Heart left ventricle (tissue), 16 donors: ENCODE measurements at regions of chr2 and their contacts with region 1.

Region 1: GRCh38 chr2:64644177-64645004 is 9.3 kb downstream of the SERTAD2 start:
- DNase-seq: peak; percentile 83 to 89 (median 86)
- ATAC-seq: peak; percentile 91 to 94 (median 92)
- H3K4me3 ChIP-seq: peak overlapping the region; percentile 11 to 62 (median 55)
- H3K27ac ChIP-seq: peak overlapping the region; percentile 63 to 96 (median 92)
- H3K4me1 ChIP-seq: peaks cover 10 to 82% (median 60%) of the 10 kb centered on the region in 12 donors
- H3K27me3 ChIP-seq: no peaks in the 10 kb centered on the region
- CTCF ChIP-seq: no peak
- POLR2A ChIP-seq: peak; percentile 6 to 90

Region 2: GRCh38 chr2:64092502-64092901 is 551.9 kb before region 1 on chr2:
- intact Hi-C with region 1: no loop called
- DNase-seq: no peak
- ATAC-seq: no peak
- H3K4me3 ChIP-seq: no peak overlapping the region
- H3K27ac ChIP-seq: no peak overlapping the region
- H3K4me1 ChIP-seq: no peaks in the 10 kb centered on the region
- H3K27me3 ChIP-seq: no peaks in the 10 kb centered on the region
- CTCF ChIP-seq: no peak
- POLR2A ChIP-seq: no peak

Region 3: GRCh38 chr2:64548761-64549160 is 95.6 kb before region 1 on chr2:
- intact Hi-C with region 1: no loop called
- DNase-seq: no peak
- ATAC-seq: no peak
- H3K4me3 ChIP-seq: no peak overlapping the region
- H3K27ac ChIP-seq: no peak overlapping the region
- H3K4me1 ChIP-seq: peaks cover 0 to 20% (median 5%) of the 10 kb centered on the region in 12 donors
- H3K27me3 ChIP-seq: no peaks in the 10 kb centered on the region
- CTCF ChIP-seq: no peak
- POLR2A ChIP-seq: no peak

Region 4: DNA sequence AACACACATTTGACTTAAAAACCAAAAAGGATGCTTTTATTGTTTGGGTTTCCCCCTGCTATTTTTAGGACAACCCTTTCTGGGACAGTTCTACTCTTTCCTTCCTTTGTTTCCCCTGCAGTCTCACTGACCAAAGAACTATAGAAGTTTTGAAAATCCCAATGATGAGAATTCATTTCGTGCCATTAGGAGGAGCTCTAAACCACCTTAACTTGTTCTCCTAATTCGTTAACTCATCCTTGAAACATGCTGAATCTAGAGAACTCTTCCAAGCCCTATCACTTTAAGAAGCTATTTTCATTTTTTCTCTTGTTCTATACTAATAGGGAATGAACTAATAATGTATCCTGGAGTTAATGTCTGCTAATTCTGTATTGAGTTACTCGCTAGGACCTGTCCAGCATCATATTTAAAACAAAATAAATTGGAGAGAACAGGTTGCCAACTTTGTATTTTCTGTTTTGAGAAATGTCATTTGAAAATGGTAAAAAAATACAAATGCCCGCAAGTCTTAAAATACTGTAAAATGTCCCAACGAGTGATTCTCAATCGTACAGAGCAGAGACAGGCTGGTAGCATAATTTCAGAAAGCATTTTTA is 57.4 kb before region 1 on chr2:
- intact Hi-C with region 1: loop called in 4 of 10 experiments (anchors 5 to 10 kb)
- DNase-seq: no peak
- ATAC-seq: peak in 3 of 4 donors; percentile 64 to 70 (median 66)
- H3K4me3 ChIP-seq: no peak overlapping the region
- H3K27ac ChIP-seq: peak overlapping the region in 1 of 12 donors; percentile 17
- H3K4me1 ChIP-seq: peaks cover 0 to 11% (median 0%) of the 10 kb centered on the region in 12 donors
- H3K27me3 ChIP-seq: no peaks in the 10 kb centered on the region
- CTCF ChIP-seq: peak; percentile 40 to 78 (median 69)
- POLR2A ChIP-seq: no peak

Region 5: DNA sequence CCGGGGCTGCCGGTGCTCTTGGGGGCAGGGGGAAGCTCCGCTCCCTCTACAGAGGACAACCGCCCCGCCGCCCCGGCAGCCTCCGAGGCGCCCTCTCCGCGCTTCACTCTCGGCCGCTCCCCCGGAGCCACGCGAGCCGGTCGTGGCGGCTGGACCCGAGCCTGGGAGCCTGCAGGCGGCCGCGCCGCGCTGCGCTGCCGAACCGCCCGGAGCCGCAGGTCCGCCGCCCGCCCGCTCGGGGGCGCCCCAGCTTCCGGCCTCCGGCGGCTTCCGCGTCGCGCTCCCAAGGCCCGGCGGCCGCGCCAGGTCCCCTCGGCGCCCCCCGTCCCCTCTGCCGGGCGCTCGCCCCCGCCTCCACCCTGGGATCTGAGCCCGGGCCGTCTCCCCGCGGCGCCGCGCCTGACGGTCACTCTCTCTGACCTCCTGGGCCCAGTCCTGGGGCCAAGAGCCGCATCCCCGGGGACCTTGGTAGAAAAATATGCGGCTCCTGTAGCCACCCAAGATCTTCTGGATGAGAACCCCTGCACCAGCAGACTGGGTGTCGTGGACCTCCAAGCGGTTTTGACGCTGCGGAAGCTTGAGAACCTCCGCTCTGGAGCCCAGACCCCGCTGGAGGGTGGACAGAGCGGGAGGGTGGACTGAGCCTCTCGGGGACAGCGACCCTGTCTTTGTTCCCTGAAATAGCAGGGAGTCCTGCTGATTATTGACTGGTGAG is 35.0 kb before region 1 on chr2:
- intact Hi-C with region 1: loop called in 4 of 10 experiments (anchors 5 kb)
- DNase-seq: peak; percentile 59 to 86 (median 68)
- ATAC-seq: peak; percentile 36 to 86 (median 65)
- H3K4me3 ChIP-seq: peak overlapping the region; percentile 20 to 88 (median 68)
- H3K27ac ChIP-seq: peak overlapping the region; percentile 39 to 86 (median 72)
- H3K4me1 ChIP-seq: peaks cover 0 to 30% (median 8%) of the 10 kb centered on the region in 12 donors
- H3K27me3 ChIP-seq: no peaks in the 10 kb centered on the region
- CTCF ChIP-seq: peak in 10 of 12 donors; percentile 13 to 71 (median 32)
- POLR2A ChIP-seq: peak in 1 of 2 donors; percentile 15

Region 6: DNA sequence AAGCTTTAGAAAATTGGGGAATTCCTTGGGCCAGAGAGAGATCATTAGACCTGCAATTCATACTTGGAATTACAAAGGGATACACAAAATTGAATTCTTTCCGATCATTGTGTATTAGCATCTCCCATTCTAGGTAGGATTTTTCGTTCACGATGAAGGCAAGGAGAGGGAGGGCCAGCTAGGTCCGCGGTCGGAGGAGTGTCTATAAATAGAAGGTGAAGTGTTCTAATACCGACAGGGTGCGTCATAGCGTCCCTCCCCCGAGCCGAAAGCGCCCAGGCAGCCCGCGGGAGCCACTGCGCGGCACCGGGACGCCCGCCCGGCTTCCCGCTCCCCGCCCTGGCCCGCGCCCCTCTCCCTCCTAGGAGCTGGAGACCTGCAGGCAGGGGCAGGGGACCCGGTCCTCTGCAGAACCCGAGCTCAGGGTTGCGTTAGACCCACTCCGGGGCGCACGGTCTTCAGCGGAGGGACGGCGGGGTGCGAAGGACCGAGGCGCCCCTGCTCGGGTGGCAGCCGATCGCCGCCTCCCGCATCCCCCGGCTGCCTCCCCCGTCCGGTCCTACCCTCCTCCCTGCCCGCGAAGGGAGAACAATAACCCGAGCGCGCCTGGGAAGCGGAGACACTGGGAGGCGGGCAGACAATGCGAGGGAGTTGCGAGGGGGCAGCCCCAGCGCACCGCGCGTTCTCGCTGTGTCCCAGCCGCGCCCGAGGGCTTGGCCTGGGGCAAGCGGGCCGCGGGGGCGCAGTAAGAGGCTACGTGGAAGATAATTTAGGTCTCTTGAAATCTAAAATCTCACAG is 123.5 kb after region 1 on chr2:
- intact Hi-C with region 1: loop called in 4 of 10 experiments (anchors 2 to 5 kb)
- DNase-seq: peak; percentile 93 to 95 (median 93)
- ATAC-seq: peak; percentile 94 to 97 (median 96)
- H3K4me3 ChIP-seq: peak overlapping the region; percentile 34 to 94 (median 77)
- H3K27ac ChIP-seq: peak overlapping the region; percentile 91 to 100 (median 98)
- H3K4me1 ChIP-seq: peaks cover 0 to 39% (median 21%) of the 10 kb centered on the region in 12 donors
- H3K27me3 ChIP-seq: no peaks in the 10 kb centered on the region
- CTCF ChIP-seq: peak in 6 of 12 donors; percentile 6 to 38 (median 16)
- POLR2A ChIP-seq: peak; percentile 38 to 93

Region 7: GRCh38 chr2:64865073-64865830 is 220.9 kb after region 1 on chr2:
- intact Hi-C with region 1: loop called in 8 of 10 experiments (anchors 1 to 5 kb)
- DNase-seq: peak; percentile 68 to 82 (median 71)
- ATAC-seq: peak; percentile 62 to 90 (median 80)
- H3K4me3 ChIP-seq: peak overlapping the region; percentile 47 to 88 (median 82)
- H3K27ac ChIP-seq: peak overlapping the region; percentile 77 to 94 (median 90)
- H3K4me1 ChIP-seq: peaks cover 0 to 58% (median 6%) of the 10 kb centered on the region in 12 donors
- H3K27me3 ChIP-seq: no peaks in the 10 kb centered on the region
- CTCF ChIP-seq: peak; percentile 28 to 100 (median 81)
- POLR2A ChIP-seq: no peak

Region 8: DNA sequence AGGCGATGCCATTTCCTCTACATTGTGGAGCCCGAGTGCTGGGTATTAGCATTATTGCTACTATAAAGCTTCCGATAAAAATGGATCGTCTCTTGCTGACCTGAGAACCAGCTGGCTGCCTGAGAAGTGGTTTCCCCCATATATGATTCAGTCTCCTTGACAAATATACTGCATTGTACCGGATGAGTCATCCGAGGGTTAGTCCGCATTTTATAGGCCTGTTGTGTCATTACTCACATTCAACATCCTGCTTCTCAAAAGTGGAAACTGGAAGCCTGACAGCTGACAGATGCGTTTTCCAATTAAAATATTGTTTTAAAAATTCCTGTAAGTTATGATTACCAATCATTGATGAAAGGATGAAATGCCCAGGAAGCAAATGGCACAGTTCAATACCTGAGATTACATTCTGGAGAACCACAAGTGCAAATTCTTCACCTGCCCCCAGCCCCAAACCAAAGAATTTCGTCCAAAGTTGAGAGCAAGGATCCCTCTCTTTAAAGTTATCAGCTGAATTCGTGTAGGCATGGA is 722.3 kb after region 1 on chr2:
- intact Hi-C with region 1: no loop called
- DNase-seq: peak in 1 of 5 donors; percentile 25
- ATAC-seq: peak in 3 of 4 donors; percentile 65 to 80 (median 76)
- H3K4me3 ChIP-seq: peak overlapping the region in 3 of 12 donors; percentile 15 to 23 (median 19)
- H3K27ac ChIP-seq: peak overlapping the region in 10 of 12 donors; percentile 0 to 73 (median 38)
- H3K4me1 ChIP-seq: peaks cover 3 to 76% (median 50%) of the 10 kb centered on the region in 12 donors
- H3K27me3 ChIP-seq: no peaks in the 10 kb centered on the region
- CTCF ChIP-seq: no peak
- POLR2A ChIP-seq: no peak

Region 9: GRCh38 chr2:65722028-65722778 is 1077.8 kb after region 1 on chr2:
- intact Hi-C with region 1: no loop called
- DNase-seq: peak; percentile 33 to 63 (median 47)
- ATAC-seq: peak; percentile 86 to 92 (median 89)
- H3K4me3 ChIP-seq: no peak overlapping the region
- H3K27ac ChIP-seq: no peak overlapping the region
- H3K4me1 ChIP-seq: no peaks in the 10 kb centered on the region
- H3K27me3 ChIP-seq: peaks cover 0 to 5% (median 0%) of the 10 kb centered on the region in 9 donors
- CTCF ChIP-seq: peak in 11 of 12 donors; percentile 7 to 60 (median 41)
- POLR2A ChIP-seq: no peak